ENCODE measurements at regions of chr10 and their contacts with region 1.

Region 1: DNA sequence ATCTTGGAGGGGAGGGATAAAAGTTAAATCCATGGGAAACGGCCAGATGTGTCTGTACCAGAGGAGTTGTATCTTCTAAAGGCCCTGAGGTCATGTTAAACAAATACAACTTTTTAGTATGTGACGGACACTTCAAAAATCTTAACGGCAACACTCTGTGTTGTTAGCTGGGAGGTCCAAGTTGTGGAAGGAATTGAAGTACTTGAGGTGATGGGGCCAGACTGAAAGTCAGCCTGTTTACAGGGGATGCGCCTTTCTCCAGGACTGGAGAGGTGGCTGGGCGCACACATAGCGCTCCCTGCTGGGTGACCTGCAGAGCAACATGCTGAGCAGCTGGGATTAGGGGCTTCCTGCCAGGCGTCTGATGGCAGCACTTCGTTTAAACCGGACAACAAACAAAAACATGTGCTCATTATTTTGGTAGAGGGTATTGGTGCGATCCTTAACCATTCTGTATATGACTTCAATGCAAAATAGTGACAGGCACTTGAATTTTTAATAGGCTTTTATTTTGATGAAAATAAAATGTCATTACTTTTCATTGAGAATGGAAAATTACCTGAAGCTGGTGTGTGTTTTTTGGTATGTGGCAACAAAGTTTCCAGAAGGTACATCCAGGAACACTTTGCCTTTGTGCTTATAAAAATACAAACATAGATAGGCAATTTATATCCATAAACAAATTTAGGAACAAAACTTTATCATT is 198.2 kb downstream of the MLLT10 start:
- DNase-seq: peak; percentile 61
- H3K4me3 Mint-ChIP-seq: no peak overlapping the region
- H3K27ac Mint-ChIP-seq: no peak overlapping the region
- H3K4me1 Mint-ChIP-seq: peaks cover 25% of the 10 kb centered on the region
- H3K27me3 Mint-ChIP-seq: no peaks in the 10 kb centered on the region

Region 2: DNA sequence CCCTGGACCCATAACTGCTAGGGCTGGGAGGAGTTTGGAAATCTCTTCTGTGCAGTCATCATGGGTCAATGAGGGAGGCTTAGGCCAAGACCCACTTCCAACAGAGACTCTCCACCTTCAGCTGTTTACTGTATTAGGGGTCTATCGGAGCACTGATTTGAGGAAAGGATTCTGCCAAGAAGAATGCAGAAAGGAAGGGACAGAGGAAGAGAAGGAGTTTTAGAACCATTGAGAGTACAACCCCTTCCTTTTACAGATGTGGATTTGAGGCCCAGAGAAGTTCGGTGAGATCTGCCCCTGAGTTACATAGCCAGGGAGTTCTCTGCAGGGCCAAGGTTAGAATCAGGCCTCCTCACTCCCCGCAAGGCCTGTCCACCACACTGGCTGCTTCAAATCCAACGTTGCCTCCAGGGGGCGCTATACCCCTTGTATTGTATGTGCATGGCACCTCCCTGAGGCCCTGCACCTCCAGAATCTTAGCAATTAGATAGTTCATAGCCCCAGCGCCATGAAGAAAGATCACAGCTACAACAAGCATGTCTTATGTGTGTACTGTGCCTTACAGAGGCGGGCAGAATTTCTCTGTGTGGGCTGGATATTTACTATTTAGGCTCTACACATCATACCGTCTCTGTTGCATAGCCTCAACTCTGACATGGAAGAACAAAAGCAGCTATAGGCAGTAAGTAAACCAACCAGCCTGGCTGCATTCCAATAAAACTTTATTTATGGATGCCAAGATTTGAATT is 453.6 kb before region 1 on chr10:
- CTCF ChIA-PET with region 1: no interaction called
- intact Hi-C with region 1: loop called (anchors 1 kb)
- DNase-seq: peak; percentile 92
- H3K4me3 Mint-ChIP-seq: no peak overlapping the region
- H3K27ac Mint-ChIP-seq: no peak overlapping the region
- H3K4me1 Mint-ChIP-seq: no peaks in the 10 kb centered on the region
- H3K27me3 Mint-ChIP-seq: no peaks in the 10 kb centered on the region

Region 3: GRCh38 chr10:21870825-21871424 is 138.7 kb after region 1 on chr10:
- CTCF ChIA-PET with region 1: no interaction called
- intact Hi-C with region 1: no loop called
- DNase-seq: no peak
- H3K4me3 Mint-ChIP-seq: no peak overlapping the region
- H3K27ac Mint-ChIP-seq: no peak overlapping the region
- H3K4me1 Mint-ChIP-seq: no peaks in the 10 kb centered on the region
- H3K27me3 Mint-ChIP-seq: no peaks in the 10 kb centered on the region

Measured in activated naive CD4-positive, alpha-beta T cell treated with anti-CD3 and anti-CD28 coated beads for 36 hours (primary cell).